ENCODE measurements at regions of chr3 and their contacts with region 1.

Region 1: DNA sequence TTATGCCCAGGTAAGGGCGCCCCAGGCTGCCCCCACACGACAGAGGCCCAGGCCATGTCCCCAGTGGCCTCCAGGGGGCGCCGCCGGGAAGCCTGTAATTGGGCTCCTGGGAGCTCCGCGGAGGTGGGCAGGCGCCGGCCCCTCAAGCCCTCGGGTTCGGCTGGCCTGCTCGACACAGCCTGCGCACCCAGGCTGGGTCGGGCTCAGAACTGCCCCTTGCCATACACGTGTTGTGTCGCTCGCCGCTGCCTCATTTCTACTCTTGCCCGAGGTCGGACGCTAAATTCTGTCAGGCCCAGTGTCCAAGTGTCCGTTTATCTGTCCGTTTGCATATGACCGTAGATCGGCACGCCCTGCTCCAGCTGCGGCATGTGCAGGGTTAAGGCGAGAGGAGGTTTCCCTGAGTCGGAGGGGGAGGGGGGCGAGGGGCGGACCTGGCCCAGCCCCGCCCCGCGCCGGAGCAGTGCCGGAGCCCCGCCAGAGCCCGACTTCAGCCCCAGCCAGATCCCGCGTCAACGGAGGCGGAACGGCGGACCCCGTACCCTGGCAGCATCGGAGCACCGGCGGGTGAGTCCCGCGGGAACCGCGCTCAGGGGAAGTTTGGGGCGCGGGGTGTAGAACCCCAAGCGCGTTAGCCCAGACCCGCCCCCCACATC is at the start of gene KLHDC8B:
- DNase-seq: peak; percentile 94
- ATAC-seq: peak; percentile 89
- H3K4me3 ChIP-seq: peak within 1 kb of the TSS; percentile 91
- H3K27ac ChIP-seq: peak within 1 kb of the TSS; percentile 81
- H3K4me1 ChIP-seq: peaks cover 33% of the 10 kb centered on the region
- H3K27me3 ChIP-seq: no peaks in the 10 kb centered on the region
- CTCF ChIP-seq: peak; percentile 97
- total RNA-seq, gene KLHDC8B: 22.4 TPM

Region 2: DNA sequence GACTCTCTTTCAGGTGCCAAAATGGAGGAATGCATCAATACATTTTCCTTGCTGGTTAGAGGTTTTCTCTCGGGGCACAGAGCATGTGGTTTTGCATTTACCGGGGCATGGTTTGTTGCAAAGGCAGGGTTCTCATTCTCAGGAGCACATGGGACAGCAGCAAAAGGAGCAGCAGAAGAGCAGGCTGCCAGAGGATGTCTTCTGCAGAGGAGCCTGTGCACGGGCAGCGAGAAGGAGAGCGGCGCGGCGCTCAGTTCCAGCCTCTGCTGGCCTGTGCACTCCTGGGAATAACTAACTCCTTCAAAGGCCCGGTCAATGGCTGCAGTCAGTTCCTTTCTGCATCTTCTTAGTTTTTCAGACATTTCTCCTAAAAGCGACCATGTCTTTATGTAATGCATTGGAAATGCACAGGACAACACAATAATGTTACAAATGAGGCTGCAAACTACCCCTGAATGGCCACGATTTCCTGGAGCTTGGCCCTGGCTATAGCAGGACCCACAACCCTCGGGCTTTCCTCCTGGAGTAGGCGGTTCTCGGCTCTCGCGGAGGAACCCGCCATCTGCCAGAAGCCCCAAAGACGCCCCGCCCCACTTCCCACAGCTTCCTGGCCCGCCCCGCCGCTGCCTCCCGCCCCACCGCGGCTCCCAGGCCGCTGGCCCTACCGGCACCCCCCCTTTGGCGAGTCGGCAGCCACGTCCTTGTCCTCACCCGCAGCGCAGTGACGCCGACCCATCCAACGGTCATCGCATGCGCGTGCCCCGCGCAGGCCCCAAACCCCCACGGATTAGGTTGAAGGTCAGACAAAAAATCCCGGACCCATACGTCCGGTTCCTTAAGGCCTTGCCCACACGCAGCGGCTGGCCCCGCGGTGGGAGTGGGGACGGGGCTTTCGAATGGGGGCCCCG is 105.5 kb after region 1 on chr3 and contains the start of gene C3orf62:
- intact Hi-C with region 1: loop called (anchors 10 kb)
- DNase-seq: peak; percentile 96
- ATAC-seq: peak; percentile 98
- H3K4me3 ChIP-seq: peak within 1 kb of the TSS; percentile 54
- H3K27ac ChIP-seq: peak within 1 kb of the TSS; percentile 95
- H3K4me1 ChIP-seq: peaks cover 19% of the 10 kb centered on the region
- H3K27me3 ChIP-seq: no peaks in the 10 kb centered on the region
- CTCF ChIP-seq: no peak
- total RNA-seq, gene C3orf62: 6.8 TPM

Region 3: DNA sequence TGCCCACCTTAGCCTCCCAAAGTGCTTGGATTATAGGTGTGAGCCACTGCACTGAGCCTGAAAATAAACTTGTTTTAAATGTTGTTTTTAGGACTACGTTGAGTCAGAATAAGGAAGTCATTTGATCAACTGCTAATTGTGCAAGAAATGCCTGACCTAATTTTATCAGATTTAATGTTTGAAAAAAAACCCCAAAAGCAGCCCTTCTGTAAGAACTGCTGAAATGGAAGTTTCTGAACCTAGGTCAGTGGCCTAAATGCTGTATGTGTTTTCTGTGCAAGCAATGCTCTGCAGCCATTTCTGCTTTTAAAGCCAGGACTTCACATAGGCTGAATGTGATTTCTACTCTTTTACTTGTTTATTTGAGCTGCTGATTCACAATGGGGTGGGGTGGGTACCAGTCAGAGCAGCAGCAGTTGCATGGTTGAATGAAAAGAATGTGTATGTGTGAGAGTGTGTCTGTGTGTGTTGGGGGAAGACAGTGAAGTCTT is 180.3 kb after region 1 on chr3:
- intact Hi-C with region 1: no loop called
- DNase-seq: no peak
- ATAC-seq: peak; percentile 17
- H3K4me3 ChIP-seq: no peak overlapping the region
- H3K27ac ChIP-seq: peak overlapping the region; percentile 83
- H3K4me1 ChIP-seq: peaks cover 54% of the 10 kb centered on the region
- H3K27me3 ChIP-seq: no peaks in the 10 kb centered on the region
- CTCF ChIP-seq: no peak